Activated B cell treated with CpG ODN at 0.5 μM for 24 hours (primary cell): ENCODE measurements at regions of chr3 and their contacts with region 1.

Region 1: GRCh38 chr3:41961750-41962679 is at the start of gene ULK4:
- DNase-seq: peak; percentile 91
- ATAC-seq: peak; percentile 88
- H3K4me3 Mint-ChIP-seq: peak within 1 kb of the TSS; percentile 97
- H3K27ac Mint-ChIP-seq: peak within 1 kb of the TSS; percentile 96
- H3K4me1 Mint-ChIP-seq: peaks cover 14% of the 10 kb centered on the region
- H3K27me3 Mint-ChIP-seq: no peaks in the 10 kb centered on the region
- CTCF ChIP-seq: no peak
- total RNA-seq, gene ULK4: 16.8 and 18.6 TPM in 2 replicates

Region 2: GRCh38 chr3:40309418-40309924 is 1652.5 kb before region 1 on chr3 and contains the start of gene EIF1B:
- CTCF ChIA-PET with region 1: no interaction called
- POLR2A ChIA-PET with region 1: interaction called, 7 read pairs
- intact Hi-C with region 1: loop called (anchors 1 kb)
- DNase-seq: peak; percentile 99
- ATAC-seq: peak; percentile 88
- H3K4me3 Mint-ChIP-seq: peak within 1 kb of the TSS; percentile 99
- H3K27ac Mint-ChIP-seq: peak within 1 kb of the TSS; percentile 99
- H3K4me1 Mint-ChIP-seq: peaks cover 35% of the 10 kb centered on the region
- H3K27me3 Mint-ChIP-seq: no peaks in the 10 kb centered on the region
- CTCF ChIP-seq: no peak
- total RNA-seq, gene EIF1B: 62.0 and 65.5 TPM in 2 replicates

Region 3: GRCh38 chr3:40971191-40972168 is 990.5 kb before region 1 on chr3:
- CTCF ChIA-PET with region 1: no interaction called
- POLR2A ChIA-PET with region 1: no interaction called
- intact Hi-C with region 1: loop called (anchors 1 kb)
- DNase-seq: peak; percentile 38
- ATAC-seq: peak; percentile 80
- H3K4me3 Mint-ChIP-seq: peak overlapping the region; percentile 60
- H3K27ac Mint-ChIP-seq: peak overlapping the region; percentile 98
- H3K4me1 Mint-ChIP-seq: peaks cover 78% of the 10 kb centered on the region
- H3K27me3 Mint-ChIP-seq: no peaks in the 10 kb centered on the region
- CTCF ChIP-seq: no peak

Region 4: DNA sequence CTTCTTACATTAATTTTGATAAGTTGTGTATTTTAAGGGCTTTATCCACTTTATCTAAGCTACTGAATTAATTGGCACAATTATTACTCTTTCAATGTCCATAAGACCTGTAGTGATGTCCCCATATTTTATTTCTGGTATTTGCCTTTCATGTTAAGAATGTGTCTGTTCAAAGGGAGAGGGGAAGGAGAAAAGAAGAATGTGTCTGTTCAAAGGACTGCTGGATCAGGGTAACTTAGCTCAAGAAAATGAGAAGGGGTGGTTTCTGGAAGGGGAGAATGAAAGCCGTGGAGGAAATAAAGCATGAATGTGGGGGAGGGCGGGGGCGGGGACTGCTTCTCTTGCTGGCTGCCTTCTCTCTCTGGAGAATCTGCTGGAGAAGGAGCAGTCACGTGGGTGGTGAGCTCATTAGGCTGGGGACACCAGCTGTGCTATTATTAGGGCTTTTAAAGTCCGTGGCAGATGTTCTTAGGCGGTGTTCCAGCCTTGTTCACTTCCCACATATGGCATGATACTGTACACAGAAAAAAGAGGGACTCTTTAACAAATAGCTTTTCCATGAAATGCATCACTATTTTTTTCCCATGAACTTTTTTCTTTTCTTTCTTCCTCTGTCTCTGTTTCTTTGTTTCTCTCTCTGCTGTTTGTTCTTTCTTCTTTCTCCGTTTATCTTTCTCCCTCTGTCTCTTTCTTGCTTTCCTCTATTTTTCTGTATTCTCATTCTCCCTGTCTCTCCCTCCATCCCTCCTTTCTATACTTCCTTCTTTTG is 63.5 kb after region 1 on chr3:
- CTCF ChIA-PET with region 1: no interaction called
- POLR2A ChIA-PET with region 1: interaction called, 17 read pairs
- intact Hi-C with region 1: no loop called
- DNase-seq: no peak
- ATAC-seq: peak; percentile 42
- H3K4me3 Mint-ChIP-seq: peak overlapping the region; percentile 70
- H3K27ac Mint-ChIP-seq: peak overlapping the region; percentile 82
- H3K4me1 Mint-ChIP-seq: peaks cover 80% of the 10 kb centered on the region
- H3K27me3 Mint-ChIP-seq: no peaks in the 10 kb centered on the region
- CTCF ChIP-seq: no peak

Region 5: DNA sequence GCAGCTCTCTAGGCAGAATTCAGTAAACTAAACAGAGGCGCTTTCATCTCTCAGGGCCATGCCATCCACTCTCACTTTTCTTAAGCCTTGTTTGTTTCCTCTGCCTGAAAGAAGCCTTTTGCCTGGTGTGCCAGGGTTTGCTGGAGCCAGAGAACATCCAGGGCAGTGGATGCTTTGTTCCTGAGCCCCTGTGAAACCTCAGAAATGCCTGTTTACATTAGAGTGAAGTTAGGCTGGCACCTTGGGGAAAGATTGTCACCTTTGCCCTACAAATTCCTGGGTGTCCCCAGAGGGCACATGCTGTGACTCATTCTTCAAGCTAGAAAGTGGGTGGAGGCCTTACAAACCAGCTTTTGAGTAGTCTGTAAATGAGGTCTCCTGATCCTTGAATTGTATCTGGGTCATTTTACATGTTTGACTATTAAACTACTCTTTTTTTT is 118.5 kb after region 1 on chr3:
- CTCF ChIA-PET with region 1: no interaction called
- POLR2A ChIA-PET with region 1: interaction called, 11 read pairs
- intact Hi-C with region 1: loop called (anchors 1 kb)
- DNase-seq: peak; percentile 51
- ATAC-seq: peak; percentile 94
- H3K4me3 Mint-ChIP-seq: peak overlapping the region; percentile 74
- H3K27ac Mint-ChIP-seq: peak overlapping the region; percentile 97
- H3K4me1 Mint-ChIP-seq: peaks cover 85% of the 10 kb centered on the region
- H3K27me3 Mint-ChIP-seq: no peaks in the 10 kb centered on the region
- CTCF ChIP-seq: no peak

Region 6: DNA sequence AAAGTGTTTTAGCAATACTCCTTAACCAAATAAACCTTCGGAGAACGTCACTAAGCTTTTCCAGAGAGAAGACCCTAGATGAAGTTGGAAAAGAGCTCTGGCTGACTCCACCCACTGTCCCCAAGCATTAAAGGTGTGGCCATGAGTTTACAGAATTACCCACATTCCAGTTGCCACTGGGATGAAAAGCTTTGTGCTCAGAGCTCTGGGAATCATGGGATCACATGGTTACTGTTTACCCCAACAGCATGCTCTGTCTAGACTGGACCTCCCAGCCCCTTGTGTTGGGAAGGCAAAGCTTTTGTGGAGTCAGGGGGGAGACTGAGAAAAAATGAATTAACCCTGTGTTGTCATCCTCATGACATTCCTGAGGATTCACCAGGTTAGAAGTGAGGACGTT is 248.7 kb after region 1 on chr3:
- CTCF ChIA-PET with region 1: no interaction called
- POLR2A ChIA-PET with region 1: no interaction called
- intact Hi-C with region 1: no loop called
- DNase-seq: no peak
- ATAC-seq: no peak
- H3K4me3 Mint-ChIP-seq: no peak overlapping the region
- H3K27ac Mint-ChIP-seq: no peak overlapping the region
- H3K4me1 Mint-ChIP-seq: peaks cover 38% of the 10 kb centered on the region
- H3K27me3 Mint-ChIP-seq: no peaks in the 10 kb centered on the region
- CTCF ChIP-seq: no peak

Region 7: DNA sequence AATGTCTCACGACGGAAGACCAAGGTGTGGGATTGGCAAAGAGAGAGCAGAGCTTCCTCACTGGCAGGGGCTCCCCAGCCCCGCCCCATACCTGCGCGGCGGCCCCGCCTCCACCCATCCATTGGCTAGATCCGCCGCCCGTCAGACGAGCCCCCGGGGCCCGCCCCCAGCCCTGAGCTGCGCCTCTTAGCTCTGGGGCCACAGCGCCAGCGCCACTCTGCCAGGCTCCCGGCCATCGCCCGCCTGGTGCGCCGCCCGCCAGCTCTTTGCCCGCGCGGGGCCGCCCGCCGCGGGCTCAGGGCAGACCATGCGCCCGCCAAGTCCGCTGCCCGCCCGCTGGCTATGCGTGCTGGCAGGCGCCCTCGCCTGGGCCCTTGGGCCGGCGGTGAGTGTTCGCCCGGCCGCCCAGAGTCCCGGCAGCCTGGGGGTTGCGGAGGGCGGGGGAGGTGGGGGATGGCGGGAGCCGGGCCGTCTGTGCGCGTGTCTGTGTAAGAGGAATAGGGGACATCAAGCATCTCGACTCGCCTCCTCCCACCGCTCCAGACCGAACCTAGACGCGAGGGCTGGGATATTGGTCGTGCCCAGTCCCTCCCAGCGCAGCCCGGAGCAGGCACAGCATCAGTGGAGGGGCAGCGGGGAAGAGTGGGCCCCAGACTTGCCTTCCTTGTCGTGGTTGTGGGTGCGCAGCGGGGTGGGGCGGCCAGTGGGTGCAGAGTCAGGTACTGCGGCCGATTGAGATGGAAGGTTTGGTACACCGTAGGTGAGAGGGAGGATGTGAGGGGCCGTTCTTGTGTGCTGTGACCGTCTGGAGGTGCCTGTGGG is 540.6 kb after region 1 on chr3 and contains the start of gene VIPR1:
- CTCF ChIA-PET with region 1: no interaction called
- POLR2A ChIA-PET with region 1: no interaction called
- intact Hi-C with region 1: loop called (anchors 5 kb)
- DNase-seq: peak; percentile 91
- ATAC-seq: peak; percentile 99
- H3K4me3 Mint-ChIP-seq: peak within 1 kb of the TSS; percentile 91
- H3K27ac Mint-ChIP-seq: peak within 1 kb of the TSS; percentile 70
- H3K4me1 Mint-ChIP-seq: peaks cover 22% of the 10 kb centered on the region
- H3K27me3 Mint-ChIP-seq: peaks cover 24% of the 10 kb centered on the region
- CTCF ChIP-seq: no peak
- total RNA-seq, gene VIPR1: 3.2 and 3.6 TPM in 2 replicates